Left colon (tissue), 2 donors: ENCODE measurements at regions of chr15 and their contacts with region 1.

Region 1: DNA sequence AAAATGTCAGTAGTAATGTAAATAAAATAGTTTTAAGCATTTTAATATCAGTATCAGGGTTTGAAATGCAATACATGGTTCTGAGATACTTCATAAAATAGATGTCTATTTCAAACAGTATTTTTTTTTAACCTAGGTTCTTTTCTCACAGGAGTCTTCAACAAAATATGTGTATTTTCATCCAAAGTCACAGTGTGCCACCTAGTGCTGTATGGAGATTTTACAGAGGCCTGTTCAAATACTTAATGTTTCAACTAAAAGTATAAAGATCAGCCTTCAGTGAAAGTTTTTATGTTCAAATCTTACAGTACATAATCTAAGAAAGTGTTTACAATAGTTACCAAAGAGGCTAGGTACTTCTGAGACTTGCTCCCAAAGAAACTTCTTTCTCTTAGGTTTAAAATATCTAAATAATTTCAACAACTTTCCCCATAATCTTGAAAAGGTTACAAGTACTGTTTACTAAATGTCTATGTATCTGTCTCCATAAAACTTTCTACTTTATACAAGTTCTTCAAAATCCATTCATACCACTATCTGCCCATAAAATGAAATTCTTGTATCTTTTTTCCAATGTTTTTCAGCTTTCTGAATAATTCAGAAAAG is 38.3 kb downstream of the SCAPER start:
- DNase-seq: no peak
- ATAC-seq: peak; percentile 56

Region 2: DNA sequence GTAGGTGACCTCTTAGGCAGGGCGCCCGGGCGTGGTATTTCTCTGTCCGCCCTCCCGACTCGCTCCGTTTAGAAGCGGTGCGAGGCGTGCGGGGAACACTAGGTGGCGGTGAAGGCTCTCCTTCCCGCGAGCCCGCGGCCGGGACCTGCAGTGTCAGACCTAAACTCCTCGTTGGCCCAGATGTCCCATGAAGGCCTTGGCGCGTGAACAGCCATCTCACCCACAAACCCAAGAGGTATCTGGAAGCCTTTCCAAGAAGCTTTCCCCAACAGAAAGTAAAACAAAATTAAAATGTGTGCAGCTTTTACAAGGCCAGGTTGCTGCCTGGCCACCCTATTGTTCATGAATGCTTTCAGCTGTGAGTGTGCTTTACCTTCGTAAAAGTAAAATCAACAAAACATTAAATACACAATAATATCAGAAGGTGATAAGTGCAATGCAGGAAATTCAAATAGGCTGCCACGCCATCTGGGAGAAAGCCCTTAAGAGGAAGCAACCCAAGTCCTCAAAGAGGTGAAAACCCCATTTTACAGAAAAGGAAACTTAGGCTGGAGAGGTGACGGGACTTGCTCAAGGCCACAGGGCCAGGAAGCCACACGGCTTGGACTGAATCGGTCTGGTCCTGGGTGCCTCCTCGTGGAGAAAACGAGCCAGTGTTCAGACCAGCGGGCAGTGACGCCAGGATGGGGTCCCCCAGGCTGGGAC is 675.8 kb before region 1 on chr15:
- intact Hi-C with region 1: loop called in 1 of 2 experiments (anchors 10 kb)
- DNase-seq: peak; percentile 71 to 90
- ATAC-seq: peak; percentile 91

Region 3: DNA sequence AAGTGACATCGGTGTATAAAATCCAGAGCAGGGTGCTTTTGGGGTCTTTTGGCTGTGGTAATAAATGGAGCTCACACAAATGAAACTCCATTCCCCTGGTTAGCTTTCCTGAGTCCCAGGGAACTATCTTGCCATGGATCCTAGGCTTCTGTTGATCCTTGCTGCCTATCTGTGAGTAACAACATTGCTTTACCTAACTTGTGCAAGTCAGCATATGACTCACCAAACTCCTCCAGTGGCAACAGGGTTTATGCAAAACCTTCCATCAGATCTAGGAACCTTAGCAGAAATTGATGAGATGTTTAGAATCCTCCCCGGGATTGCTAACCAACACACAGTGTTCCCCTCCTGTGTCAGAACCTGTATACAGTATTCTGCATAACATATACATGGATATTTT is 67.1 kb before region 1 on chr15:
- intact Hi-C with region 1: loop called in 1 of 2 experiments (anchors 10 kb)
- DNase-seq: no peak
- ATAC-seq: no peak